MCF 10A (cell line): ENCODE measurements at regions of chr16 and their contacts with region 1.

Region 1: GRCh38 chr16:75464130-75464918 is at the start of gene TMEM170A:
- DNase-seq: peak; percentile 99
- H3K4me3 Mint-ChIP-seq: peak within 1 kb of the TSS; percentile 95
- H3K27ac Mint-ChIP-seq: peak within 1 kb of the TSS; percentile 92
- H3K4me1 Mint-ChIP-seq: peaks cover 32% of the 10 kb centered on the region
- H3K27me3 Mint-ChIP-seq: no peaks in the 10 kb centered on the region
- CTCF ChIP-seq: peak; percentile 99
- total RNA-seq, gene TMEM170A: 20.1 and 21.8 TPM in 2 replicates

Region 2: DNA sequence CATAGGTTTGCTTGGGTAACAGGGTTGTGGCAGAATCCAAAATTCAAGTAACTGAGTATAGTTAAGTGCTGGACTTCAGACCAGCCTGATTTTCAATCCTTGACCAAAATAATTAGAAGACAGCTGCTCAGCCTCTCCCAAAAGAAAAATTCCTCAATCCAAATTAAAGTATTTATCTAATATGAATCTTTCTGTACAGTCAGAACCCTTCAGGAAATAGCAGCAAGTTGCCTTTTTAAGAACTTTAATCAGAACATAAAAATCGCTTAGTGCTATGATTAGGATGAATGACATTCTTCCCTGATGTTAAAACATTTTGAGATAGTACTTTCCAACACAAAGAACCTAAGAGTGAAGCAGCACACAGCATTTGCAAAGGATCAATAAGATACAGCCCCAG is 81.2 kb before region 1 on chr16:
- CTCF ChIA-PET with region 1: no interaction called
- POLR2A ChIA-PET with region 1: no interaction called
- intact Hi-C with region 1: no loop called
- DNase-seq: no peak
- H3K4me3 Mint-ChIP-seq: no peak overlapping the region
- H3K27ac Mint-ChIP-seq: no peak overlapping the region
- H3K4me1 Mint-ChIP-seq: peaks cover 24% of the 10 kb centered on the region
- H3K27me3 Mint-ChIP-seq: no peaks in the 10 kb centered on the region
- CTCF ChIP-seq: no peak

Region 3: GRCh38 chr16:75432828-75433731 is 31.2 kb before region 1 on chr16 and contains the start of gene CFDP1:
- CTCF ChIA-PET with region 1: interaction called, 5 read pairs
- POLR2A ChIA-PET with region 1: interaction called, 22 read pairs
- intact Hi-C with region 1: no loop called
- DNase-seq: peak; percentile 95
- H3K4me3 Mint-ChIP-seq: peak within 1 kb of the TSS; percentile 77
- H3K27ac Mint-ChIP-seq: peak within 1 kb of the TSS; percentile 86
- H3K4me1 Mint-ChIP-seq: peaks cover 13% of the 10 kb centered on the region
- H3K27me3 Mint-ChIP-seq: no peaks in the 10 kb centered on the region
- CTCF ChIP-seq: no peak
- total RNA-seq, gene CFDP1: 41.3 and 44.7 TPM in 2 replicates

Region 4: DNA sequence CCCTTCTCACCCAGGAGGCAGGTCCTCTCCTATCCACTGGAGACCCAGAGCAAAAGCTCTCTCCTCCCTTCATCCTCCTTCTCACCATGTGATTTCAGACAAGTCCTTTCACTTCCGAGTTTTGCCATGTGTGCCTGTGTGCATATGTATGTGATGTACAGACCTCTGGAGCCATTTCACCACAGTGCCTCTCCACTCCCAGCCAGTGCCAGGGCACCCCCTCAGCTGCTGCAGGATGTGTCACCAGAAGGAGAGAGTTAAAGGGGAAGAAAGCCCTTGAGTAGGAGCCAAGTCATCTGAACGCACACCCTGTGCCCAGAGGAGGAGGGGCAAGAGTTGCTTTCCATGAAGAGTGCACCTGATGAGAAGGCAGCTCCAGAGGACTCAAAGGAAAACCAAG is 13.8 kb after region 1 on chr16:
- CTCF ChIA-PET with region 1: interaction called, 15 read pairs
- POLR2A ChIA-PET with region 1: interaction called, 26 read pairs
- intact Hi-C with region 1: no loop called
- DNase-seq: peak; percentile 67
- H3K4me3 Mint-ChIP-seq: no peak overlapping the region
- H3K27ac Mint-ChIP-seq: no peak overlapping the region
- H3K4me1 Mint-ChIP-seq: peaks cover 23% of the 10 kb centered on the region
- H3K27me3 Mint-ChIP-seq: no peaks in the 10 kb centered on the region
- CTCF ChIP-seq: no peak

Region 5: DNA sequence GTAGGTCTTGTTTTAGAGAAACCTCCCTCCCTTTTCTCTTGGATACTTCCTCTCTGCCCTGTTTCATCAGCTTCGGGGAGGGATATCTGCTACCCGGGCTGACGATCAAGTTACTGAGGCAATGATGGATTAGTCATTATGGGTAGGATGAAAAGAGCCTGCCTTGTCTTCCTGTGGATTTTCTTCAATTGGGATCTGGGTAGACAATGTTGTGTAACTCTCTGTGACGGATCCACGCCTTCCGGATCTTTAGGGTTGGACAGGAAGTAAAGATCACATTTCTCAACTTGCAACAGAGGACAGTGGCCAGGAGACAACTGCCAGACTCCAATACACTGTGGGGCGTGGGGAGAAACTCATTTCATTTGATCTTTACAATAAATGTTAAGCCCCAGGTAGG is 42.2 kb after region 1 on chr16:
- CTCF ChIA-PET with region 1: interaction called, 11 read pairs
- POLR2A ChIA-PET with region 1: no interaction called
- intact Hi-C with region 1: no loop called
- DNase-seq: peak; percentile 98
- H3K4me3 Mint-ChIP-seq: peak overlapping the region; percentile 42
- H3K27ac Mint-ChIP-seq: peak overlapping the region; percentile 95
- H3K4me1 Mint-ChIP-seq: peaks cover 34% of the 10 kb centered on the region
- H3K27me3 Mint-ChIP-seq: no peaks in the 10 kb centered on the region
- CTCF ChIP-seq: no peak

Region 6: GRCh38 chr16:75555707-75556430 is 91.5 kb after region 1 on chr16 and contains the start of gene TMEM231:
- CTCF ChIA-PET with region 1: interaction called, 12 read pairs
- POLR2A ChIA-PET with region 1: interaction called, 12 read pairs
- intact Hi-C with region 1: loop called (anchors 2 kb)
- DNase-seq: peak; percentile 94
- H3K4me3 Mint-ChIP-seq: peak within 1 kb of the TSS; percentile 85
- H3K27ac Mint-ChIP-seq: peak within 1 kb of the TSS; percentile 91
- H3K4me1 Mint-ChIP-seq: peaks cover 6% of the 10 kb centered on the region
- H3K27me3 Mint-ChIP-seq: no peaks in the 10 kb centered on the region
- CTCF ChIP-seq: no peak
- total RNA-seq, gene TMEM231: 18.6 and 21.1 TPM in 2 replicates